ENCODE measurements at regions of chr16 and their contacts with region 1.

Region 1: DNA sequence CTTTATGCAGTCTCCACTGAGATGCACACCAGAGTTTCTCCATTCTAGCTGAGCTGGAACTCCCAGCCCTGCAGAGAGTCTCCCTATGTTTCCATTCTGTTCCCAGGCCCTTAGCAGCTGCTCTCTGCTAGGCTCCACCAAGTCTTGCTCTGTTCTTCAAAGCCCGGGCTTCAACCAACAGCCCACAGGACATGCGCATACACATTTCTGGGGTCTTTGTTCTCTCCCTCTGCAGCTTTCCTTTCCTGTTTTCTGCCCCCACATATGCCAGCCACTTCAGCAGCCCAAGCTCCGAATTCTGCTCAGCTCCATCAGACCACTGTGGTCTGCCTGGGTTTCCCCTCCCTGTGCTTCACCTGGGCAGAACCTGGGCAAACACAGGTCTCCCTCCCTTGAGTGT is 205.9 kb downstream of the CBLN1 start:
- DNase-seq: no peak
- H3K4me3 ChIP-seq: no peak overlapping the region
- H3K4me3 Mint-ChIP-seq: no peak overlapping the region
- H3K27ac ChIP-seq: no peak overlapping the region
- H3K27ac Mint-ChIP-seq: no peak overlapping the region
- H3K4me1 ChIP-seq: no peaks in the 10 kb centered on the region
- H3K4me1 Mint-ChIP-seq: no peaks in the 10 kb centered on the region
- H3K27me3 ChIP-seq: no peaks in the 10 kb centered on the region
- H3K27me3 Mint-ChIP-seq: peaks cover 0 to 1% (median 0%) of the 10 kb centered on the region in 3 donors
- CTCF ChIP-seq: no peak

Region 2: GRCh38 chr16:48745541-48745940 is 330.2 kb before region 1 on chr16:
- intact Hi-C with region 1: no loop called
- DNase-seq: no peak
- H3K4me3 ChIP-seq: no peak overlapping the region
- H3K4me3 Mint-ChIP-seq: no peak overlapping the region
- H3K27ac ChIP-seq: no peak overlapping the region
- H3K27ac Mint-ChIP-seq: no peak overlapping the region
- H3K4me1 ChIP-seq: no peaks in the 10 kb centered on the region
- H3K4me1 Mint-ChIP-seq: no peaks in the 10 kb centered on the region
- H3K27me3 ChIP-seq: no peaks in the 10 kb centered on the region
- H3K27me3 Mint-ChIP-seq: peaks cover 0 to 1% (median 0%) of the 10 kb centered on the region in 3 donors
- CTCF ChIP-seq: no peak

Region 3: GRCh38 chr16:49019081-49019633 is 56.6 kb before region 1 on chr16:
- intact Hi-C with region 1: loop called in 1 of 2 experiments (anchors 10 kb)
- DNase-seq: no peak
- H3K4me3 ChIP-seq: no peak overlapping the region
- H3K4me3 Mint-ChIP-seq: no peak overlapping the region
- H3K27ac ChIP-seq: no peak overlapping the region
- H3K27ac Mint-ChIP-seq: no peak overlapping the region
- H3K4me1 ChIP-seq: no peaks in the 10 kb centered on the region
- H3K4me1 Mint-ChIP-seq: no peaks in the 10 kb centered on the region
- H3K27me3 ChIP-seq: no peaks in the 10 kb centered on the region
- H3K27me3 Mint-ChIP-seq: peaks cover 9 to 18% (median 9%) of the 10 kb centered on the region in 3 donors
- CTCF ChIP-seq: no peak

Region 4: DNA sequence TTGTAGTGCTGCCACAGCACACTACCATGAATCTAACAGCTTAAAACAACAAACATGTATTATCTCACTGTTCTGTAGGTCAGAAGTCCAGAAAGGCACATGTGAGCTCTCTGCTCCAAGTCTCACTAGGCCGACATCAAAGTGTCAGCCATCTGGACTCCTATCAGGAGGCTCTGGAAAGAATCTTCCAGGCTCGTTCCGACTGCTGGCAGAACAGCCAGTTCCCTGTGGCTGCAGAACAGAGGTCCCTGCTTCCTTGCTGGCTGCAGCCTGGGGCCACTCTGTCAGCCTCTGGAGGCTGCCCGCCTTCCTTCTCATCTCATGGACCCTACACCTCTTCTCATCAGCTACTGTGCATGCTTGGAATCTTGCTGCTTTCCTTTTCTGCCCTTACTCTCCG is 37.0 kb after region 1 on chr16:
- intact Hi-C with region 1: no loop called
- DNase-seq: no peak
- H3K4me3 ChIP-seq: no peak overlapping the region
- H3K4me3 Mint-ChIP-seq: no peak overlapping the region
- H3K27ac ChIP-seq: no peak overlapping the region
- H3K27ac Mint-ChIP-seq: no peak overlapping the region
- H3K4me1 ChIP-seq: no peaks in the 10 kb centered on the region
- H3K4me1 Mint-ChIP-seq: no peaks in the 10 kb centered on the region
- H3K27me3 ChIP-seq: no peaks in the 10 kb centered on the region
- H3K27me3 Mint-ChIP-seq: no peaks in the 10 kb centered on the region
- CTCF ChIP-seq: no peak

Region 5: DNA sequence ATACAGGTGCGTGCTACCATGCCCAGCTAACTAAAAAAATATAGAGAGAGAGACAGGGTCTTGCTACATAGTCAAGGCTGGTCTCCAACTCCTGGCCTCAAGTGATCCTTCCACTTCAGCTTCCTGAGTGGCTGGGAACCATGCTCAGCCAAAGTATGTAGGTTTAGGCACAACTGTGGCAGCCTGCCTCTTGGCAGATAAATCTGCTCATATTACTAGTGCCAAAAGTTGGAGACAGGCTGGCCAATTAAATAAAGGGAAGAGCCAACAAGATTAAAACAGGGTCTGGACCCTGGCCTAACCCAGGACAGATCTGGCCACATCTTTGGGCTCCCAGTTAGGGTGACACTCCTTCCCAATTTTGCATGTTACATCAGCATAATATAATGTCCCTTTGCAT is 54.2 kb after region 1 on chr16:
- intact Hi-C with region 1: loop called in 1 of 2 experiments (anchors 10 kb)
- DNase-seq: no peak
- H3K4me3 ChIP-seq: no peak overlapping the region
- H3K4me3 Mint-ChIP-seq: no peak overlapping the region
- H3K27ac ChIP-seq: no peak overlapping the region
- H3K27ac Mint-ChIP-seq: no peak overlapping the region
- H3K4me1 ChIP-seq: no peaks in the 10 kb centered on the region
- H3K4me1 Mint-ChIP-seq: no peaks in the 10 kb centered on the region
- H3K27me3 ChIP-seq: no peaks in the 10 kb centered on the region
- H3K27me3 Mint-ChIP-seq: no peaks in the 10 kb centered on the region
- CTCF ChIP-seq: no peak